Mammary epithelial cell (primary cell): ENCODE measurements at regions of chr19 and their contacts with region 1.

Region 1: GRCh38 chr19:13748169-13748828 is 16.0 kb upstream of the MRI1 start:
- DNase-seq: peak; percentile 24
- H3K4me3 ChIP-seq: peak overlapping the region; percentile 65 to 97 (median 84)
- H3K27ac ChIP-seq: peak overlapping the region; percentile 93
- H3K4me1 ChIP-seq: peaks cover 6% of the 10 kb centered on the region
- H3K27me3 ChIP-seq: no peaks in the 10 kb centered on the region
- CTCF ChIP-seq: no peak

Region 2: DNA sequence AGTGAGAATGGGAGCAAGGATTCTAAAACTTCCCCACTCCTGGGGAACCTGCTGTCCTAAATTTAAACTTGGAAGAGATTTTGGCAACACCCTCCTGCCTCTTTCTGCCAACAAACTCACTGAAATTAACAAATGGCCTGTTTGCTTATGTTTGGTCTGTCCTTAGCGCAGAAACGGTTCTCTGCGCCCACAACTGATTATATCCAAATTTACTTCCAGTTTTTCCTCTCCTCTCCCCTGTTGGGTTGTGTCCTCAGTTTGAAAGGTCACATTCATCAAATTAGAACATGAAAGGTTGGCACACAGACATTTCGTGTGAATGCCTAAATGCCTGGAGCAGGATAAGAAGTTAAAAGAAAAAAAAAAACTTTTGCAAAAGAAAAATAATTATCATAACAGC is 40.4 kb before region 1 on chr19:
- CTCF ChIA-PET with region 1: no interaction called
- dilution Hi-C with region 1: no loop called
- in situ Hi-C with region 1: no loop called
- intact Hi-C with region 1: no loop called
- DNase-seq: no peak
- H3K4me3 ChIP-seq: no peak overlapping the region
- H3K27ac ChIP-seq: no peak overlapping the region
- H3K4me1 ChIP-seq: peaks cover 7% of the 10 kb centered on the region
- H3K27me3 ChIP-seq: no peaks in the 10 kb centered on the region
- CTCF ChIP-seq: no peak

Region 3: DNA sequence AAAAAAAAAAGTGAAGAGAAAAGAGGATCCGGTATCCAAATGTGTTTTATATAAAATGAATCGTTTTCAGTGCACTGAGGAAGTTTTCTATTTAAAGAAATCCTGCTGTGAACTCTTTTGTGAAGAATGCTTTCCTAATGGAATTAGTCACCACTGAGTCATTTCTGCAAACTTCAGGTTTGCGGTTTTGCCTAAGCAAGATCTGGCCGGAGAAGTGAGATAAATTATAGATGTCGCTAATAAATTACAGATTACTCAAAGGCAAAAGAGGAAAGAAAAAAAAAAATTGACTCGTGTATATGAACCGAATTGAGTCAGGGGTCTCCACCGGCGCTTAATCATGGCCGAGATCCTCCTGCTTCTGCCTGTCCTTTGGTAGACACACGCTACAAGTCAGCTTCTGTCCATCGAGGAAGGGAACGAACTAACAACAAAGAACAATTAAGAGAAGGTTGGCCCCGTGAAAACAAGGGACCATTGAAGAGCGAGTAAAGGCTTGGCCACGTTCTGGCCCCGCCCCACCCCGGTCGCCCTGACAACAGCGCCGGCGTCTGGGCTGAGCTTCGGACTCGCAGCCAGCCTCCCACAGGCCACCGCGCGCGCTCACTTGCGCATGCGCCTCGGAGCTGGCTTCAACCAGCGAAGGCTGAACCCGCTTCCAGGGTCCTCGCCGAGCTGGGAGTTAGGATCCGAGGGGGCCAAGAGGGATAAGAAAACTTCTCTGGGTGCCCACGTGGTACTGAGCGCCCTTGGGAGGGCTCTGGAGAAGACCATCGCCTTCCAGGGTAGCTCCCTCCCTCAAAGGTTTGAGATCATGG is 16.9 kb before region 1 on chr19:
- CTCF ChIA-PET with region 1: no interaction called
- dilution Hi-C with region 1: no loop called
- in situ Hi-C with region 1: no loop called
- intact Hi-C with region 1: loop called (anchors 2 kb)
- DNase-seq: peak; percentile 93
- H3K4me3 ChIP-seq: peak overlapping the region; percentile 47 to 62 (median 54)
- H3K27ac ChIP-seq: peak overlapping the region; percentile 97
- H3K4me1 ChIP-seq: peaks cover 24% of the 10 kb centered on the region
- H3K27me3 ChIP-seq: no peaks in the 10 kb centered on the region
- CTCF ChIP-seq: no peak

Region 4: GRCh38 chr19:13774217-13775191 is 26.2 kb after region 1 on chr19 and contains the start of gene C19orf53:
- CTCF ChIA-PET with region 1: no interaction called
- dilution Hi-C with region 1: no loop called
- in situ Hi-C with region 1: no loop called
- intact Hi-C with region 1: loop called (anchors 2 kb)
- DNase-seq: peak; percentile 89
- H3K4me3 ChIP-seq: peak within 1 kb of the TSS; percentile 80 to 98 (median 84)
- H3K27ac ChIP-seq: peak within 1 kb of the TSS; percentile 76
- H3K4me1 ChIP-seq: no peaks in the 10 kb centered on the region
- H3K27me3 ChIP-seq: no peaks in the 10 kb centered on the region
- CTCF ChIP-seq: no peak
- total RNA-seq, gene C19orf53: 37.3 to 109 TPM